Thyroid gland (tissue), 4 donors: ENCODE measurements at regions of chr2 and their contacts with region 1.

Region 1: GRCh38 chr2:69914170-69914960 is 544 bp upstream of the MXD1 start:
- DNase-seq: peak; percentile 100
- H3K4me3 ChIP-seq: peak overlapping the region; percentile 47 to 59 (median 53)
- H3K27ac ChIP-seq: peak overlapping the region; percentile 94 to 98 (median 98)
- H3K4me1 ChIP-seq: peaks cover 7 to 16% of the 10 kb centered on the region in 2 donors
- H3K27me3 ChIP-seq: no peaks in the 10 kb centered on the region
- CTCF ChIP-seq: peak in 1 of 6 experiments; percentile 14
- POLR2A ChIP-seq: peak; percentile 75 to 93

Region 2: DNA sequence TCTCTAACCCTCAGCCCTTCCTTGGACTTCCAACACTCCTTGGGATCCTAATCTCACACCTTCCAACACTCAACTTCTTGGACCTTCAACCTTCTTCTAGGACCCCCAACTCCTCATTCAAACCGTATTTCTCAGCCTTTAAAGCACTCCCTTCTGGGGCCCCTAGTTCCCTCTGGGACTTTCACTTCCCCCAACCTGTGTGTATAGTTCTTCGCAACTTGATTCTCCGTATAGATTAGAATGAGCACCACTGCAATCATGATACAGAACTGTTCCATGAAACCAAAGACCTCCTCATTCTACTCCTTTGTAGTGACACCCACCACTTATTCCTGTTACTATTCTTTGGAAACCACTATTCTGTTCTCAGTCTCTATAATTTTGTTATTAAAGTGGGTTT is 415.1 kb before region 1 on chr2:
- intact Hi-C with region 1: no loop called
- DNase-seq: no peak
- H3K4me3 ChIP-seq: no peak overlapping the region
- H3K27ac ChIP-seq: no peak overlapping the region
- H3K4me1 ChIP-seq: no peaks in the 10 kb centered on the region
- H3K27me3 ChIP-seq: no peaks in the 10 kb centered on the region
- CTCF ChIP-seq: no peak
- POLR2A ChIP-seq: no peak

Region 3: GRCh38 chr2:70070541-70071268 is 156.3 kb after region 1 on chr2:
- intact Hi-C with region 1: loop called (anchors 5 kb)
- DNase-seq: peak; percentile 63 to 71
- H3K4me3 ChIP-seq: no peak overlapping the region
- H3K27ac ChIP-seq: peak overlapping the region; percentile 75 to 92 (median 92)
- H3K4me1 ChIP-seq: peaks cover 23 to 52% of the 10 kb centered on the region in 2 donors
- H3K27me3 ChIP-seq: no peaks in the 10 kb centered on the region
- CTCF ChIP-seq: peak; percentile 57 to 92 (median 84)
- POLR2A ChIP-seq: peak in 1 of 2 donors; percentile 16

Region 4: DNA sequence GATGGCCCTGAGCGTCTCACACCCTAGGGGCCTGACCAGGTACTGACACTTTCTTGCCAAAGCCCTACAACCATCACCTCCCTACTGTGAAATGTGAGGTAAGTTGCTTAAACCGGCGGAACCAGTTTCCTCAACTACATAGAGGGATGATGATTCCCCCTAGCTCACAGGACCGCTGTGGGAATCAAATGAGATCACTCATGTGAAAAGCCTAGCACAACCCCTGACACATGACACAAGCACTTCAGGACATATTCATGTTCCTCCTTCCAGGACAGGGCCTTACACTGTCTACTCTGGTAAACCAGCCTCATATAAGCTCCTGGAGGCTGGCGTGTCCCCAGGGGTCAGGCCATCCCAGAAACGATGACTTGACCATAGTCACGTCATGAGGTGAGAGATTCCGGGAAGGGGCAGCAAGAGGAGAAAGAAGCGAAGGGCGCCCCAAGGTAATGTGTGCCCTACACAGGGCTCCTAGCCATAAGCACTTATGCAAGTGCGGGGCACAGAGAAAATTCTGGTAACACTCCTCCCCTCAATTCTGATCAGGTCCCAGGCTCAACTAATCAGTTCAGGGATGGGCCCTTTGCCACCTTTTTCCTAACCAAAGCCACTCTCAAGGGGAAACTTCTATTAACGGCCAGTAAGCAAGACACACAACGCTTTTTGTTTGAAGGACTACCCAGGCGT is 227.0 kb after region 1 on chr2:
- intact Hi-C with region 1: loop called (anchors 5 kb)
- DNase-seq: peak; percentile 88 to 90
- H3K4me3 ChIP-seq: peak overlapping the region; percentile 3 to 65 (median 3)
- H3K27ac ChIP-seq: peak overlapping the region; percentile 98 to 100 (median 99)
- H3K4me1 ChIP-seq: peaks cover 26 to 36% of the 10 kb centered on the region in 2 donors
- H3K27me3 ChIP-seq: no peaks in the 10 kb centered on the region
- CTCF ChIP-seq: peak in 5 of 6 experiments; percentile 22 to 84 (median 71)
- POLR2A ChIP-seq: peak; percentile 61 to 85

Region 5: GRCh38 chr2:70190418-70191243 is 276.3 kb after region 1 on chr2 and contains the start of gene C2orf42:
- intact Hi-C with region 1: loop called (anchors 5 kb)
- DNase-seq: peak; percentile 97
- H3K4me3 ChIP-seq: peak within 1 kb of the TSS; percentile 41 to 67 (median 54)
- H3K27ac ChIP-seq: peak within 1 kb of the TSS; percentile 95 to 97 (median 96)
- H3K4me1 ChIP-seq: peaks cover 0 to 4% of the 10 kb centered on the region in 2 donors
- H3K27me3 ChIP-seq: no peaks in the 10 kb centered on the region
- CTCF ChIP-seq: no peak
- POLR2A ChIP-seq: peak; percentile 86 to 91
- total RNA-seq, gene C2orf42: 9.8 to 26.5 (median 18.0) TPM

Region 6: GRCh38 chr2:70301344-70302194 is 387.2 kb after region 1 on chr2 and contains the start of gene FAM136A:
- intact Hi-C with region 1: loop called (anchors 5 kb)
- DNase-seq: peak; percentile 83 to 88
- H3K4me3 ChIP-seq: peak within 1 kb of the TSS; percentile 60 to 96 (median 72)
- H3K27ac ChIP-seq: peak within 1 kb of the TSS; percentile 68 to 82 (median 81)
- H3K4me1 ChIP-seq: peaks cover 0 to 12% of the 10 kb centered on the region in 2 donors
- H3K27me3 ChIP-seq: no peaks in the 10 kb centered on the region
- CTCF ChIP-seq: peak; percentile 57 to 99 (median 97)
- POLR2A ChIP-seq: peak in 1 of 2 donors; percentile 65
- total RNA-seq, gene FAM136A: 20.5 to 47.3 (median 39.4) TPM